PC-9 (cell line): ENCODE measurements at regions of chr12 and their contacts with region 1.

Region 1: GRCh38 chr12:2256915-2257314 is 204.1 kb downstream of the CACNA1C start:
- DNase-seq: no peak
- H3K4me3 ChIP-seq: no peak overlapping the region
- H3K27ac ChIP-seq: no peak overlapping the region
- H3K4me1 ChIP-seq: no peaks in the 10 kb centered on the region
- H3K27me3 ChIP-seq: peaks cover 61% of the 10 kb centered on the region
- CTCF ChIP-seq: no peak

Region 2: DNA sequence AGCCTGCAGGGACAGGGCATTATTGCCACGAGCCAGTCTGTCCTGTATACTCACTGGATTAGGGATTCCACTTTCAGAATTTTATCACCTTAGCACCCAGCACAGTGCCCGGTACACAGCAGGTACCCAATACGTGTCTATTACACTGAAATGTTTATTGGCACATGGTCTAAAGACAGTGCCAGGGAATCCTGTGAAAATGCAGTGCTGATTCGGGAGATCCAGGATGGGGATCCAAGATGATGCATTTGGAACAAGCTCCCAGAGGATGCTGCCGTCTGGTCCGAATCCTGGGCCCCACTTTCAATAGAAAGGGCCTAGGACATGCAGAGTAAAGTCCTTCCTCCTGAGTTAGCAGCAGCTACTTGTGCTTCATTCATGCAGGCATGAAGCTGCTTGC is 26.6 kb after region 1 on chr12:
- CTCF ChIA-PET with region 1: no interaction called
- POLR2A ChIA-PET with region 1: interaction called, 28 read pairs
- intact Hi-C with region 1: no loop called
- DNase-seq: no peak
- H3K4me3 ChIP-seq: no peak overlapping the region
- H3K27ac ChIP-seq: no peak overlapping the region
- H3K4me1 ChIP-seq: no peaks in the 10 kb centered on the region
- H3K27me3 ChIP-seq: peaks cover 95% of the 10 kb centered on the region
- CTCF ChIP-seq: no peak

Region 3: DNA sequence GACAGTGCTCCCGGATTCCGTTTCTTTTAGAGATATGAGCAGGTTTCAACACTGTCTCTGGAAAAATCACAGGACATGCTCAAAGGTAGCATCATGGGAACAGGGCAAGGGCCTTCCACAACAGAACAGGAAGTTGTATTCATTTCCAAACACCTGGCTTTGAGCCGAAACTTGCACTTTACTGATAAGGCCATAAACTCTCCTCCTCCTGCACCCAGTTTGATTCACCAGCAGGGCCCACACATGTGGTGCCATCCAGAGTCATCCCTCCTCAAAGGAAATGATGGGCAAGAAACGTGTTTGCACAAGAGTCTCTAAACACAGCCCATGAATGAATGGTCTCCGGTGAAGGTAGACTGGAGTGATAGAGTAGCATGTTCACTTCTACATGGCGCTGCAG is 269.5 kb after region 1 on chr12:
- CTCF ChIA-PET with region 1: no interaction called
- POLR2A ChIA-PET with region 1: no interaction called
- intact Hi-C with region 1: no loop called
- DNase-seq: no peak
- H3K4me3 ChIP-seq: no peak overlapping the region
- H3K27ac ChIP-seq: no peak overlapping the region
- H3K4me1 ChIP-seq: no peaks in the 10 kb centered on the region
- H3K27me3 ChIP-seq: peaks cover 98% of the 10 kb centered on the region
- CTCF ChIP-seq: no peak